ENCODE measurements at regions of chr10 and their contacts with region 1.

Region 1: DNA sequence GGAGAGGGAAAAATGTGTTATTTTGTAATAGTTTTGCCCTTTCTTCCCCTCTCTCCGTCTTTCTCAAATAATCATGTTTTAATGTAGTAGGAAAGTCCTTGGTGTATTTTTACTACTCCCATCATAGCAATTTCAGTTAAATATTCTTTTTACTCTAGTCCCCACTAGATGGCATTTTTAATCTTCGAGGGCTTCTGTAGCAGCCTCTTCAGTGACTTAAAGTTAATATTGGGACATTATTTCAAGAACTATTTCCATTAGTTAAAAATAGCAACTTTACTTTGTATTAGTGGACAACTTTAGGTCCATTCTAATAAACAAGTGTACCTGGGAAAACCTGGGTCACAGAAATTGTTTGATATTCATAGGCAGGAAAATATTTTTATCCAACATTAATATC is 23.0 kb downstream of the EDRF1 start:
- DNase-seq: no peak
- ATAC-seq: no peak
- H3K4me3 ChIP-seq: no peak overlapping the region
- H3K4me3 Mint-ChIP-seq: no peak overlapping the region
- H3K27ac ChIP-seq: no peak overlapping the region
- H3K27ac Mint-ChIP-seq: no peak overlapping the region
- H3K4me1 ChIP-seq: no peaks in the 10 kb centered on the region
- H3K4me1 Mint-ChIP-seq: peaks cover 0 to 8% (median 1%) of the 10 kb centered on the region in 7 donors
- H3K27me3 ChIP-seq: no peaks in the 10 kb centered on the region
- H3K27me3 Mint-ChIP-seq: no peaks in the 10 kb centered on the region

Region 2: DNA sequence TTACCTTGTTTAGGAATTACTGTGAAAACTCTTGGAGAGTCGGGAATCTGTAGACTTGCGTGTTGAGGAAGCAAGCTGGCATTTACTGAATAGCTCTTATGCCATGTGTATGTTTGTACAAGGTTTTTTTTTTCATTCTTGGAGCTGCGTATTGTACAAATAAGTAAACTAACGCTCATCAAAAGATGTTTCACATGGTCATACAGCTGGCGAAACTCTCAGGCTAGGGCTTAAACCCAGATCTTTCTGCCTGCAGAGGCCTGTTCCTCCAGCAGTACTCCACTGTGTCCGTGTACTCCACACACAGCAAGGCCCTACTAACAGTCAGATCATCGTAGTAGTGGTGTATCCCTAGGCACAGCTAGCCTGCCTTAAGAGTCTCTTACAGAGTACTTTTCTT is 15.6 kb before region 1 on chr10:
- CTCF ChIA-PET with region 1: no interaction called
- POLR2A ChIA-PET with region 1: no interaction called
- intact Hi-C with region 1: loop called in 1 of 2 experiments (anchors 2 kb)
- DNase-seq: no peak
- ATAC-seq: no peak
- H3K4me3 ChIP-seq: no peak overlapping the region
- H3K4me3 Mint-ChIP-seq: no peak overlapping the region
- H3K27ac ChIP-seq: no peak overlapping the region
- H3K27ac Mint-ChIP-seq: peak overlapping the region in 1 of 9 donors; percentile 14
- H3K4me1 ChIP-seq: peaks cover 0 to 4% of the 10 kb centered on the region in 2 donors
- H3K4me1 Mint-ChIP-seq: peaks cover 6 to 23% (median 17%) of the 10 kb centered on the region in 7 donors
- H3K27me3 ChIP-seq: no peaks in the 10 kb centered on the region
- H3K27me3 Mint-ChIP-seq: no peaks in the 10 kb centered on the region